ENCODE measurements at regions of chr14 and their contacts with region 1.

Region 1: DNA sequence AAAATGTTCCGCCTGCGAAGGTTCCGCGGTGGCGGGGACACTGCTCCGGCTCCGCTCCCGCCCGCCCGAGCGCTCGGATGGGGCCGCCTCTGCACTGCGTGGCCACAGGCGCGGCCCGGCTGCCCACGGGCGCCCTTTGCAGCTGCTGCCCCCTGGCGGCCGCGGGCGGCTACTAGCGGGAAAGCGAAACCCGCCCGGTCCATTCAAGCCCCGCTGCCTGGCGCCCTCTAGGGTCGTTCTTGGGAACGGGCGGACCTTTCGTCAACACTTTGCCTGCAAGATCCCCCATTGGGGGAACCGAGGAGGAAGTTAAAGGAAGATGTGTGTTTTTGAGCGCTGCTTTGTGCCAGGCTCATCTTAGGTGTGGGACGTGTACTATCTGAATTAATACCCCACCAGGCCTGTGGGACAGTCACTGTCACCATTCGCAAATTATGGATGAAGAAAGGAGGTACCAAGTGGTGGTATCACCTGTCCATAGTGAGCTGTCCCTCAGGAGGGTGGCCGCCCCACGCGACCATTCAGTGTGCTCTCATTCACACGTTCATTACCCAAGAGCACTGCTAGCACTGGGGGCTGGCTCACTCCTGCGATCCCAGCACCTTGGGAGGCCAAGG is 19.4 kb downstream of the GPR132 start:
- DNase-seq: peak; percentile 56
- H3K4me3 ChIP-seq: peak overlapping the region in 1 of 4 donors; percentile 19
- H3K27ac ChIP-seq: no peak overlapping the region
- H3K4me1 ChIP-seq: peaks cover 0 to 54% (median 4%) of the 10 kb centered on the region in 3 donors
- H3K27me3 ChIP-seq: peaks cover 0 to 9% (median 0%) of the 10 kb centered on the region in 4 donors
- CTCF ChIP-seq: peak; percentile 100
- POLR2A ChIP-seq: no peak

Region 2: DNA sequence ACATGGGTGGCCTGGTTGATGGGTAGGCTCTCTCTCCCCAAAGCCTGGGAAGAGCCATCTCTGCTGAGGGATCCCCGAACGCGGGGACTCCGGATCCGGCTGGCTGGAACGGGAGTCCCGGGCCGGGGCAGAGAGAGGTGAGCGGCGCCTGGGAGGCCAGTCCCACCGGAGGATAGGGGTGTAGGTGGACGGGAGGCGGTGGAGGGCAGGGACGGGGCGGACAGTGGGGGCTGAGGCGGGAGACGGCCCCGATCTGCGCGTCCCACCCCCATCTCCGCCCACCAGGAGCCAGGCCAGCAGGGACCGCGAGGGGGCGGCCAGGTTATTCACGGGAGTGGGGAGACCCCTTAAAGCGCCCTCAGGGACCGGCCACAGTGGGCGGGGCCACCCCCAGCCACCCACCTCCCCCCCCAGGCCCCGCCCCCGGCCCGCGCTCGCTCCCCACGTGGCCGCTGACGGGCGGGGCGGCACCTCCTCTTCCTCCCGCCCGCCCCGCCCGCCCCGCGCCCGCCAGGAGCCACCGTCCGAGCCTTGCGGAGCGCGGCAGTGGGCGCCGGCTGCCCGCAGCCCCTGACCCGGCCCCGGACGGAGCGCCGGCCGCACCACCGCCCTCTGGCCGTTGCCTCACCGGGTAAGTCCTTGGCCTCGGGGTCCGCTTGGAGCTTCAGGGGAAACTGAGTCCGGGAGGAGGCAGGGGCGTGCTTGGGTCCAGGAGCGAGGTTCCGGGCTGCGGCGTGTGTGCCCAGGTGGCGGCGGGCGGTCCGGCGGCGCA is 356.5 kb before region 1 on chr14 and contains the start of gene INF2:
- intact Hi-C with region 1: no loop called
- DNase-seq: no peak
- H3K4me3 ChIP-seq: peak within 1 kb of the TSS; percentile 72 to 99 (median 92)
- H3K27ac ChIP-seq: peak within 1 kb of the TSS; percentile 86 to 90 (median 87)
- H3K4me1 ChIP-seq: peaks cover 47 to 79% (median 66%) of the 10 kb centered on the region in 3 donors
- H3K27me3 ChIP-seq: no peaks in the 10 kb centered on the region
- CTCF ChIP-seq: peak in 1 of 6 experiments; percentile 13
- POLR2A ChIP-seq: peak in 1 of 4 donors; percentile 38
- total RNA-seq, gene INF2: 36.7 to 43.6 (median 37.8) TPM

Region 3: GRCh38 chr14:104895786-104896661 is 149.8 kb before region 1 on chr14:
- intact Hi-C with region 1: loop called (anchors 5 kb)
- DNase-seq: no peak
- H3K4me3 ChIP-seq: no peak overlapping the region
- H3K27ac ChIP-seq: no peak overlapping the region
- H3K4me1 ChIP-seq: peaks cover 0 to 36% (median 0%) of the 10 kb centered on the region in 3 donors
- H3K27me3 ChIP-seq: no peaks in the 10 kb centered on the region
- CTCF ChIP-seq: no peak
- POLR2A ChIP-seq: no peak

Region 4: DNA sequence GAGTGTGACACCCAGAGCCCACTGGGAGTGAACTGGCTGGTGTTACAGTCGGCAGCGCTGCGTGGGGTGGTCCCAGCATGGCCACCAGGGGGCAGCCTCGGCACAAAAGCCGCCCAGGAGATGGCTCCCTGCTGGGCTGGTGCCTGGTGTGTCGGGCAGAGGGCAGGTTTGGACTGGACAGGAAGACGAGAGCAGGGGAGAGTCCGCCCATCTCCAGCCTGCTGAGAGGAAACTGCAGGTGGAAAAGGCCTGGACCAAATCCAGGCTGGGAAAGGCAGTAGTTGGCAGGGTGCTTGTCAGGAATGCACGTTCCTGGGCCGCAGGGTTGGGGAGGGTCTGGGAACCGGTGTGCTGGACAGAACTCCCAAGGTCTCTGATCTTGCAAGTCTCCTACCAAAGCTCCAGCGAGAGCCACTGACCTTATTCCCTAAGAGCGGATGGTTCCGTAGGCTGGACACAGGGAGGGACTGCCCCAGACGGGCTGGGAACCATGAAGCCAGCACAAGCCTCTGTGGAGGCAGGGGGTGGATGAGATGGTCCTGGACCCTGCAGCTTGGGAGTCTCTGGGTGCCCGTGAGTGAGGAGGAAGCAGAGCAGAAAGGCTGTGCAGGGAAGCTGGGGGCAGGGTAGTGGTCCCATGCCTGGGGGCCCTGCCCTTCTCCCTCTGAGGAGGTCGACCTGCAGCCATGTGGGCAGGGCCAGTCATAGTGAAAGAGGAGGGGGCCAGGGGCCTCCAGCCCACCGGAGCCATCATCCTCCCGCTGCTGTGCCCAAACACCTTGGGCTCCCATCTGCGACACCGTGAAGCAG is 69.4 kb before region 1 on chr14:
- intact Hi-C with region 1: loop called (anchors 2 kb)
- DNase-seq: no peak
- H3K4me3 ChIP-seq: peak overlapping the region in 2 of 4 donors; percentile 69 to 77
- H3K27ac ChIP-seq: peak overlapping the region in 3 of 4 donors; percentile 23 to 97 (median 46)
- H3K4me1 ChIP-seq: peaks cover 67 to 92% (median 69%) of the 10 kb centered on the region in 3 donors
- H3K27me3 ChIP-seq: peaks cover 0 to 26% (median 0%) of the 10 kb centered on the region in 4 donors
- CTCF ChIP-seq: peak; percentile 85 to 98 (median 97)
- POLR2A ChIP-seq: no peak